AG04449 (cell line): ENCODE measurements at regions of chr2 and their contacts with region 1.

Region 1: DNA sequence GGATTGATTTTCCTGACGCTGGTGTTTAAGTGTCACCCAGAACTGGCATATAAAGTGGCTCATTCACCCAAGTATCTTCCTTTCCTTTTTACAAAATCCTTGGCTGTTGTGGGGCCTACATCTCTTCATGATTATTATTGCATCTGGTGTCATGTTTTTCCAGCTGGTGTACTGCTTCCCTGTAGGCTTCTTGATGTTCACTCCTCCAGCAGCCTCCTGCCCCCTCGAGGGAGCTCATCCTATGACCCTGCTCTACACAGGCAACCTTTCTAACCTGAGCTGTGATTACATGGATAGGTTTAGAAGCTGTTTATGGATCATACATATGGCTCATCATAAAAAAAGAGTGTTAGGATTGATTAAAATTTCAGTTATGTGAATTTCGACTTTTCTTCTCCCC is 12.4 kb upstream of the AGPS start:
- DNase-seq: no peak
- H3K4me3 ChIP-seq: no peak overlapping the region
- CTCF ChIP-seq: no peak

Region 2: GRCh38 chr2:177392373-177393202 is 12.4 kb after region 1 on chr2 and contains the start of gene AGPS:
- CTCF ChIA-PET with region 1: interaction called, 19 read pairs
- POLR2A ChIA-PET with region 1: interaction called, 7 read pairs
- DNase-seq: no peak
- H3K4me3 ChIP-seq: peak within 1 kb of the TSS; percentile 78
- CTCF ChIP-seq: peak; percentile 22